ENCODE measurements at regions of chr2 and their contacts with region 1.

Region 1: GRCh38 chr2:224585205-224586088 is at the start of gene CUL3:
- DNase-seq: peak; percentile 92 to 95 (median 94)
- ATAC-seq: peak; percentile 94
- H3K4me3 ChIP-seq: peak within 1 kb of the TSS; percentile 70
- H3K27ac ChIP-seq: peak within 1 kb of the TSS; percentile 86
- H3K4me1 ChIP-seq: peaks cover 0 to 12% of the 10 kb centered on the region in 2 experiments; a peak in 3 of 5 replicates
- H3K27me3 ChIP-seq: no peaks in the 10 kb centered on the region
- CTCF ChIP-seq: no peak; a peak in 1 of 6 replicates
- EP300 ChIP-seq: peak; percentile 2; the same call in 1 of the 2 replicates
- POLR2A ChIP-seq: peak; percentile 90
- RAD21 ChIP-seq: no peak
- polyA plus RNA-seq, gene CUL3: 31.5 to 33.3 TPM

Region 2: DNA sequence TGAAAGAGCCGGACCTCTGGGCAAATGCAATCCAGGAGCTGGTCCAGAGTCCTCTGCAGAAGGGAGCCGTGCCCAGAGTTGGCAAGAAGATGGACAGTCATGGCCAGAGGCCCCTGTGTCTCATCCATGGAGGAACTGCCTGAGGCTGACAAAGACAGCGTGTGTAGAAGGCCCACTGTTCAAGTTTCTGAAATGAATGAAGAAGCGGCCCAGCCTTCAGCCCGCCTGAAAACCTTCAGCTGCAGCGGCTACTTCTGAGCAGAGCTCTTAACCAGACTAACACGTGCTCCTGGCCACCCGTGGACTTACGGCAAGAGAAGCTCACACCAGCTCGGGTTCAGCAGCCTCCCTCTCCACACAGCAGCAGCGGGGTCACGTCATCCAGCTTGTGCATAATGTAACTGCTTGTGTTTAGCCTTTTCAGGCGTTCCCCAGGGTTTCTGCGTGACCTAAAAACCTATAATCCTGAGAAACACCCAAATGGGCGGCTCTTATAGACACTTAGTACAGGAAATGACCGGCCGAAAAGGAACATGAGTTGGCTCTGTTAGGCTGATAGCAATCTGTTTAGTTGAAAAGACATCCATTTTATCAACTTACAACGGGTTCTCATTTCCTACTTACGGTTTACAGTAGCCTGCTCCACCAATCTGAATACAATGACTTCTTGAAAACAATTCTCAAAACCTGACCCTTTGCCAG is 183.7 kb before region 1 on chr2 and contains the start of gene FAM124B:
- CTCF ChIA-PET with region 1: no interaction called
- POLR2A ChIA-PET with region 1: interaction called, 3 read pairs
- in situ Hi-C with region 1: no loop called
- intact Hi-C with region 1: loop called (anchors 5 kb)
- DNase-seq: peak; percentile 35 to 84 (median 42)
- ATAC-seq: peak; percentile 87
- H3K4me3 ChIP-seq: peak within 1 kb of the TSS; percentile 45
- H3K27ac ChIP-seq: peak within 1 kb of the TSS; percentile 95
- H3K4me1 ChIP-seq: peaks cover 0 to 4% of the 10 kb centered on the region in 2 experiments; a peak in 3 of 5 replicates
- H3K27me3 ChIP-seq: no peaks in the 10 kb centered on the region
- CTCF ChIP-seq: no peak
- EP300 ChIP-seq: peak; percentile 68; the same call in 1 of the 2 replicates
- POLR2A ChIP-seq: peak; percentile 79
- RAD21 ChIP-seq: no peak
- polyA plus RNA-seq, gene FAM124B: 15.5 to 21.4 TPM